ENCODE measurements at regions of chr16 and their contacts with region 1.

Region 1: DNA sequence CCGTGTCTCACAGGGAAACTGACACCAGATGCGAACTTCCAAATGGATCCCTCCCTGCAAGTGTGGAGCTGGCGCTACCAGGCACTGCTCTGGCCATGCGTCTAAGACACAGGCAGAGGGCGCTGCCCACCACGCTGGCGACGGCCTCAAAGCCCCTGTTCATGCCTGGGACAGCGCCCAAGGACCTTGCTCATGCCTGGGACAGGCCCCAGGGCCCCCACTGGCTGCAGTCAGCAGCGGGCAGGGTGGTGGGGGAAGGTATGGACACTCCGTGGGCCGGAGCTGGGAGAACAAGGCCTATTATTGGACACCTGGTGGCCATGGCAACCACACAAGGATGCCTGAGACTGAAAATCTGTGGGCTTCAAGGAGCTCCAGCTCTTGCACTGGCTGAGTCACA is 8.8 kb downstream of the ZG16B start:
- DNase-seq: peak; percentile 73
- H3K4me3 Mint-ChIP-seq: no peak overlapping the region
- H3K27ac Mint-ChIP-seq: no peak overlapping the region
- H3K4me1 Mint-ChIP-seq: peaks cover 32% of the 10 kb centered on the region
- H3K27me3 Mint-ChIP-seq: peaks cover 3% of the 10 kb centered on the region

Region 2: DNA sequence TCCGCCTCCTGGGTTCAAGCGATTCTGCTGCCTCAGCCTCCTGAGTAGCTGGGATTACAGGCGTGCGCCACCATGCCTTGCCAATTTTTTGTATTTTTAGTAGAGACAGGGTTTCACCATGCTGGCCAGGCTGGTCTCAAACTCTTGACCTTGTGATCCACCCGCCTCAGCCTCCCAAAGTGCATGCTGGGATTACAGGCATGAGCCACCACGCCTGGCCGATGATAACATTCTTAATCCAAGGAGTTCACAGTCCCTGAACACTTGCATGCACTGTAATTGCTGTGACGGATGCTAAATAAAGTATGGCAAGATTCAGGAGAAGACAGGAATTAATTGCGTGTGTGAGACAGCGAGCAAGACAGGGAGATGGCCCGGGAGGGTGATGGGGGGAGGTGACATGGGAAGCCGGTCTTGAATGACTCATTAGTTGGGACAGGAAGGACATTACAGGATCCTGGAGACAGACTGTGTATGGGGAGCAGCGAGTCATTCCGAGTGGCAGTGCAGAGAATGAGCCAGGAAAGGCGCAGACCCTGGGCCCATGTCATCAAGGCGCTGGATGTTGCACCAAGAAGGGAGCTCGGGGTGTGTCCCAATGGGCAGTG is 505.1 kb before region 1 on chr16:
- CTCF ChIA-PET with region 1: no interaction called
- intact Hi-C with region 1: no loop called
- DNase-seq: no peak
- H3K4me3 Mint-ChIP-seq: no peak overlapping the region
- H3K27ac Mint-ChIP-seq: no peak overlapping the region
- H3K4me1 Mint-ChIP-seq: peaks cover 11% of the 10 kb centered on the region
- H3K27me3 Mint-ChIP-seq: peaks cover 12% of the 10 kb centered on the region

Region 3: DNA sequence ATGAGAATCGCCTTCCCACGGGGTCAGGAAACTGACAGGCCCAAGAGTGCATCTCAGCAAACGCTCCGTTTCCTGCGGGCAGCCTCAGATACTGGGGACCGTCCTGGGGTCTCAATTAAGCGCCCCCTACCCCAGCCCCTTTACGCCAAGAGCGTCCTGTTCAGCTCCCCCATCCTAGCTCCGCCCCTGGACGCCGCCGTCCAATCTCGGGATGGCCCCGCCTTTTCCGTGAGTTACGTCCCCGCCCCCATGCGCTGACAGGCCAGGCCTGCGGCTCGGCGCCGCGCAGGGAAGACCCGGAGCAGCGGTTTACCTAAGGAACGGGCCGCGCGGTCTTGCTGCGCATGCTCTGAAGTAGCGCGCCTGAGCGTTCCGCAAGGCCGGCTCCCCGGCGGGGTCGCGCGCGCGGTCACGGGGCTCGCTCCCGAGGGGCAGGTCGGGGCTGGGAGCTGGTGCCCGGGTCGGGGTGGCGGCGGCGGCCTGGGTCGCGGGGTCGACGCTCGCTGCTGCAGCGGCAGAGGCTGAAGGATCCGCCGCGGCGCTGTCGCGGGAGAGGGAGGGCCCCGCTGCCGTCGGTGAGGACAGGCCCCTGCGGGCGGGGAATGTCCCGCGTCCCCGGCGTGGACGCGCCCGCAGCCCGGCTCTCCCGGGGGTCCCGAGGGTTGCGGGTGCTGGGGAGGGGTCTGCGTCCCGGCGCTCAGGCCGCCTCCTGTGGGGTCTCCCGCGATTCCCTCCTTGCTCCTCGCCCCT is 72.8 kb after region 1 on chr16 and contains the start of gene FLYWCH1:
- CTCF ChIA-PET with region 1: interaction called, 10 read pairs
- intact Hi-C with region 1: loop called (anchors 1 kb)
- DNase-seq: peak; percentile 100
- H3K4me3 Mint-ChIP-seq: peak within 1 kb of the TSS; percentile 88
- H3K27ac Mint-ChIP-seq: peak within 1 kb of the TSS; percentile 79
- H3K4me1 Mint-ChIP-seq: peaks cover 27% of the 10 kb centered on the region
- H3K27me3 Mint-ChIP-seq: no peaks in the 10 kb centered on the region
- total RNA-seq, gene FLYWCH1: 33.5 to 35.4 TPM

Region 4: GRCh38 chr16:2926650-2927646 is 88.0 kb after region 1 on chr16:
- CTCF ChIA-PET with region 1: interaction called, 14 read pairs
- intact Hi-C with region 1: loop called (anchors 2 kb)
- DNase-seq: peak; percentile 95
- H3K4me3 Mint-ChIP-seq: no peak overlapping the region
- H3K27ac Mint-ChIP-seq: no peak overlapping the region
- H3K4me1 Mint-ChIP-seq: peaks cover 9% of the 10 kb centered on the region
- H3K27me3 Mint-ChIP-seq: no peaks in the 10 kb centered on the region

Measured in activated naive CD4-positive, alpha-beta T cell treated with anti-CD3 and anti-CD28 coated beads for 36 hours (primary cell).